ENCODE measurements at regions of chr1 and their contacts with region 1.

Region 1: DNA sequence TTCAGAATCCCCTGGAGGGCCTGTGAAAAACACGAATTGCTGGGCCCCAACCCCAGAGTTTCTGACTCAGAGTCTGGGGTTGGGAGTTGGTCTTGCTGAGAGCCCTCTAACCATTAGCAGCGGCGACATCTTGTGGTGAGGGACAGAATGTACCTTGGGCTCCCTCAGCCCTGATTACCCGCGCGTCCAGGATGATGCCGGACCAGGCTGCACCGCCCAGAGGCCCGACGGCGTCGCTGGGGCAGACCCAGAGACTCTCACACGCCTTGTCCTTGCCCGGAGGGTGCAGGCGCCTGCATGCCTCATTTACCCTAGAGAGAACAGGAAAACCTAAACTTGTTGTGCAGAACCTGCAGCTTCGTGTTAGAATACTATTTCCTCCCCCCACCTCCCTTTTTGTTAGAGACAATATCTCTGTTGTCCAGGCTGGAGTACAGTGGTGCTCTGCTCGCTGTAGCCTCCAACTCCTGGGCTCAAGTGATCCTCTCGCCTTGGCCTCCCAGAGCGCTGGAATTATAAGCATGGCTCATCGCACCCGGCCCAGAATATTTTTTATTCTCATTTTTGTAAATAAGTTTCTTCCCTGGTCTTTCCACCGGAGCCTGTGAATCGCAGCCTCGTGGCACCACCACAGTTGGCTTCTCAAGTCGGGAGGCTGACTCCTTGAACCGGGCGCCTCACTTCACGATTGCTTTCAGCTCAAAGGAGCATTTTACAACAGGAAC is 22.2 kb upstream of the RD3 start:
- DNase-seq: peak; percentile 28
- H3K4me3 ChIP-seq: no peak overlapping the region
- CTCF ChIP-seq: peak; percentile 90

Region 2: GRCh38 chr1:211469938-211470529 is 44.2 kb before region 1 on chr1:
- CTCF ChIA-PET with region 1: interaction called, 60 read pairs
- POLR2A ChIA-PET with region 1: no interaction called
- DNase-seq: no peak
- H3K4me3 ChIP-seq: no peak overlapping the region
- CTCF ChIP-seq: peak; percentile 91

Region 3: DNA sequence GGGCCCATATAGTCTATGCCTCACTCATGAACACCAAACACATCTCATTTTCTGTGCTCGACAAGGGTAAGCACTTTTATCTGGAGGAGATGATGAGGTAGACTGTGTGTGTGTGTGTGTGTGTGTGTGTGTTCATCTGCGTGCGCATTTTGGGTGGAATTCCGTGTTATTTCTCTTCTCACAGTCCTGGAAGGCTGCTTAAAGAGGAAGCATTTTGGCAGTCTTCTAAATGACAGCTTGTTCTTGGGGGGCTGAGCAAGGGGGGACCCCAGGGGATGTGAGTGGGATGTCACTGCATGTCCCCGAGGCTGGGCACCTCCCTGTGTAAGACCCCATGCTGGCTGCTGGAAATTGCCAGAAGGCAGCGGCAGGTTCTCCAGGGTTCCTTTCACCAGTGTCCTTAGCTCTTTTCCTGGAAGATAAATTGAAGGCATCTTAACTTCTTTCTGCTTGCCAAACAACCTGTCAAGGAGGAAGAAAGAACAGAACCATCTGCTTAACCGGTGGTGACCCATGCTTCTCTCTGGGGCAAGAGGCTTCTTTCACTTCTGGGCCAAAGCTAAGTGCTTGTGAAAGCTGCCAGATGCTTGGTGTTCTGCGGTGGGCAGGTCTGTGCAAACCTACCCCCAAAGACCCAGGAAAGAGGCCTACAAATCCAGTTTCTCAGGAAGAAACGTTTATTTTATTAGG is 12.3 kb before region 1 on chr1:
- CTCF ChIA-PET with region 1: interaction called, 81 read pairs
- POLR2A ChIA-PET with region 1: no interaction called
- DNase-seq: no peak
- H3K4me3 ChIP-seq: no peak overlapping the region
- CTCF ChIP-seq: no peak

Region 4: DNA sequence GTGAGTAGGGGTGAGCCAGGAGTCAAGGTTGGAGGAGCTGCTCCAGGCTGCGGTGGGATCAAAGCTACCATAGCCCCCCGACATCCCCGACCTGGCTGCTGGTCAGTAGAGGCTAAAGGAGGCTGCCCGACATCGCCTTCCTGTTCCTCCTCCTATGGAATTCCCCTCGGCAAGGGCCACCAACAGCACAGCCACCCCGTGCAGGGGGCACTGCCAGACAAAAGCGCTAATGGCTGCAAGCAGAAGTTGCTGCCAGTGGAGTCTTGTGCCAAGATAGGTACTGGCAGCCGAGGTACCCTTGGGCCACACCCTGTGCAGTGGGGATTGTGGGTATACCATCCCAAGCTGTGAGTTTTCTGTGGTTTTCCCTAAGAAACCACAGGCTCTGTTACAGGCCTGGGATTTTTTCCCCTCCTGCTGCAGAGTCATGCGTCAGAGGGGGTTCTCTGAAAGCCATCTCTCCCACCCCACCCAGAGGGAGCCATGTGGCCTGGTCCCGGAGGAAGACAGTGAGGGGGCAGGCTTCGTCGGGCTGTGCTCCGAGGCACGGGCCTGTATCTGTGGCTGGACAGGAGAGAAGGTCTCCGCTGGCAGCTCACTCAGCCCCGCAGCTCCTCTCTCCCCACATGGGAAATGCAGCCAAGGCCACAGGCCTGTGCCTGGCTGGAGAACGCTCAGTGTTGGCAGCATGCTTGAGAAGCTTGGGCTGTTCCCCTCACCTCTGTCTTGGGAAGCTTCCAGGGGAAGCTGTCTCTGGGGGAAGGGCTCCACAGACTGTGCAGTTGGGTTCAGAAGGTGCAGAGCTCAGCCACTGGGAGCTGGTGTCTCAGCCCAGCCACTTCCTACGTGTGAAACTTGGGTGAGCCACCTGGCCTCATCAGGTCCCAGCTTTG is 118.7 kb after region 1 on chr1:
- CTCF ChIA-PET with region 1: interaction called, 11 read pairs
- POLR2A ChIA-PET with region 1: no interaction called
- DNase-seq: peak; percentile 61
- H3K4me3 ChIP-seq: no peak overlapping the region
- CTCF ChIP-seq: no peak

Region 5: DNA sequence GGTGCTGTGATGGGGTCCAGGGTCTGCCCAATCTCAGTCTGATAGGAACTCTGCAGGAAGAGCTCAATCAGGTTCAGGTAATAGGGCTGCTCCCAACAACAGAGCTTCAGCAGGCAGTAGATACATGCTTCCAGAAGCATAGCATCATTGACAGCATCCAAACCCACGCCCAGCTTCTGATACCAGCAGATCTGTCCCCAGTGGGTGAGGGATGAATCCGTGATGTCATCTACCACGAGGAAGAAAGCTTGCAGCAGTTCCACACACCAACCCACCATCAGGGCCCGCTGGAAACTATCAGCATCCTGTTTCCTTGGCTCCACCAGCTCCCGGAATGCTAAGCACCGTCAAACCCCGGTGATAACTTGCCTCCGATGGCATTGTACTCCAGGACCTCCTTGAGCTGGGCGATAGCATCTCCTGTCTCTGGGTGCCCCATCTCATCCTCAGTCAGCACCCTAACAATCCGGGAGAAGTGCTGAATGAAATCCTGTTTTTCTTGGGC is 146.6 kb after region 1 on chr1:
- CTCF ChIA-PET with region 1: interaction called, 344 read pairs
- POLR2A ChIA-PET with region 1: no interaction called
- DNase-seq: no peak
- H3K4me3 ChIP-seq: no peak overlapping the region
- CTCF ChIP-seq: no peak

Measured in AG04449 (cell line).